Activated naive CD8-positive, alpha-beta T cell treated with anti-CD3 and anti-CD28 coated beads, Interleukin-2, amount 10 ng/mL, durations not matched to agents 7 days and 5 days (primary cell): ENCODE measurements at regions of chr6 and their contacts with region 1.

Region 1: DNA sequence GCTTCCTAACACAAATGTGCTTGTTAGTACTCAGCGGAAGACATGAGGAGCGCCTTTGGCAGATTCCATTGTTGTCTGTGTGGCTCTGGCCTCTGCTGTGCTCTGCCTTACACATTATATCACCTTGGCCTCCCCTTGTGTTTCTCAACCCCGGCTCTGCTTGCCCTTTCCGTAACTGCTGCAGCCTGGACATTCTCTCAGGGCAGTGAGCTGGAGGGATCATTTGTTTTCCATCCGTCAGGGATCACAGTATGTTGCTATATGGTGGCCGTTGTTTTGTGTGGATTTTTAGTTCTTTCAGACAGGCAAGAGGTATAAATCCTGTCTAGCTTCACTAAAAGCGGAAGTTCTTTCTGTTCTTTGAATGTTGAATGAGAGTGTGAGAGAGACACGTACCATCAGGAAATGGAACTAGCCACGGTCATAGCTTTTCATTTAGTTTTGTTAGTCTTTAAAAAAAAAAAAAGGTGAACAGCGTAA is 175.1 kb downstream of the JARID2 start:
- DNase-seq: peak; percentile 45
- ATAC-seq: peak; percentile 68
- H3K4me3 Mint-ChIP-seq: peak overlapping the region; percentile 77
- H3K27ac Mint-ChIP-seq: peak overlapping the region; percentile 92
- H3K4me1 Mint-ChIP-seq: peaks cover 50% of the 10 kb centered on the region
- H3K27me3 Mint-ChIP-seq: no peaks in the 10 kb centered on the region

Region 2: DNA sequence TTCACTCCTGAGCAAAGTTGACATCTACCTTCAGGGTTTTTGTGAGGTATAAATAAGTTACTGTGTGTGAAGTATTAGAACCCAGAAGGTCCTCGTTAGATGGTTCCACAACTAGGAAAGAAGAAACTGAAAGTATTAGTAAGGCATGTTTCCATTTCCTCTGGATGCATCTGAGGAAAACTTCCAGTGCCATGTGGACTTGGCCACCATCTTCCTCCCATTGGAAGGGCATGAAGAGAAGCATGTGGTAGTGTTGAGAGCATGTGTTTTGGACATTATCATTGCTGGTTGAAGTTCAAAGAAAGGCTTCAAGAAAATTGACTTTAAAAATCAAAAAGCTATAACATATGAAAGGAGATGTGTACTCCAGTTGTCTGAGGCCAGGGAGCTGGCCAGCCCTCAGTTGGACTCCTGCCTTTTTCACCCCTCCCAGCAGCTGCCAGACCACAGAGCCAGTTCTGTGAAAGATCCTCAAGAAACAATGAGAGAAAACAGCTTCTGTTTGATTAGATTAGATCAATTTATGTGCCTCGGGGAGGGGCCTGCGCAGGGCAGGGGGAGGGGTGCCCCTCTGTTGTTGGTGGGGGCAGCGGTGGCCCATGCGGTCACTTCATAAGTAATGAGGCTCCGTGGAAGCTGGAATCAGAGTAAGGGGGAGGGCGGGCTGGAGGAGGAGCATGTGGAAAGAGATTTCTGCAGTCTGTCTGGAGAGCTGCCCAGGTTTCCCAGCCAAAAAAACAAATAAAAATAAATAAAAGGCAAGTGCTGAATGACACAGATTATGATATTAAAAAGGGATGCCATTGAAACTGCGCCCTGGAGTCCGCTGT is 21.1 kb before region 1 on chr6:
- POLR2A ChIA-PET with region 1: interaction called, 36 read pairs
- DNase-seq: no peak
- ATAC-seq: no peak
- H3K4me3 Mint-ChIP-seq: peak overlapping the region; percentile 91
- H3K27ac Mint-ChIP-seq: peak overlapping the region; percentile 94
- H3K4me1 Mint-ChIP-seq: peaks cover 62% of the 10 kb centered on the region
- H3K27me3 Mint-ChIP-seq: no peaks in the 10 kb centered on the region

Region 3: GRCh38 chr6:15439410-15440025 is 18.5 kb after region 1 on chr6:
- POLR2A ChIA-PET with region 1: interaction called, 10 read pairs
- DNase-seq: no peak
- ATAC-seq: peak; percentile 12
- H3K4me3 Mint-ChIP-seq: peak overlapping the region; percentile 75
- H3K27ac Mint-ChIP-seq: peak overlapping the region; percentile 91
- H3K4me1 Mint-ChIP-seq: peaks cover 73% of the 10 kb centered on the region
- H3K27me3 Mint-ChIP-seq: no peaks in the 10 kb centered on the region

Region 4: GRCh38 chr6:15479761-15480160 is 58.8 kb after region 1 on chr6:
- POLR2A ChIA-PET with region 1: no interaction called
- DNase-seq: no peak
- ATAC-seq: no peak
- H3K4me3 Mint-ChIP-seq: no peak overlapping the region
- H3K27ac Mint-ChIP-seq: no peak overlapping the region
- H3K4me1 Mint-ChIP-seq: peaks cover 23% of the 10 kb centered on the region
- H3K27me3 Mint-ChIP-seq: no peaks in the 10 kb centered on the region